IMR-90 (cell line): ENCODE measurements at regions of chr11 and their contacts with region 1.

Region 1: DNA sequence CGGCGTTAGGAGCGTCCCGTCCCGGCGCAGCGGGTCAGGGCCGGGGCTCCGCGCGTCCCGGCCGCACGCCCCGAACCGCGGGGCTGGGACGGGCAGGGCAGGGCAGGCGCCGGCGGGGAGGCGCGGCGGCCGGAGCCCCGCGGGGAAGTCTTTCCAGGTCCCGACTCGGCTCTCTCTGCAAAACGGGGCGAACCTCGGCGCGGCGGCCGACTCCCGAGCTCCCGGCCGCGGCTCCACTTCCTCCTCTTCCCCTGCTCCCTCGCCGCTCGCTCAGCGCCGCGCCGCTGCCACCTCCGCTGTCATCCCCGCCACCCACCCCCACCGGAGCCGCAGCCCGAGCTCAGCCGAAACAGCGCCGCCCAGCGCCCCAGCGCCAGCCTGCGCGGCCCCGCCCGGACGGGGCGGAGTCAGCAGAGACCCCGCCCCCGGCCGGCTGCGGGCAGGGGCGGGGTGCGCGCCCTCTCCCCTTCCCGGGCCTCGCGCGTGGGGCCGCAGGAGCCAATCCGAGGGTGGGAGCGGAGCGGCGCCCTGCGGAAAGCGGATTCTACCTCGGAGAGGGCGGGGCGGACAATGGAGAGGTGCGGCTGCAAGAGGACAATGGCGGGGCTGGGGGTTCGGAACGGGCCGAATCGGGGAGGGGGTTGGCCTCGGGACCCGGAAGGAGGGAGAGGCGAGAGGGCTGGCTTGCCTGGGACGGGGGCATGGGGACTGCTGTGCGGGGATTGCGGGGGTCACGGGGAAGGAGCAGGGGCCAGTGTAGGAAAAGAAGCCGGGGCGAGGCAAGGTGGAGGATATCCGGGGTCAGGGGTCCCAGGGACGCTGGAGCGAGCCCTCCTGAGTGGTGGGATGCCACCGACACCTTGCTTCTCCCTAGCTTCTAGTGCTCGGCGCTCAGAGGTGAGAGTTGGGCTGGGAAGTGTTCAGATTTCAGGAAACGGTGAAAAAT is at the start of gene GDPD5:
- DNase-seq: peak; percentile 64
- ATAC-seq: peak; percentile 98
- H3K4me3 ChIP-seq: peak within 1 kb of the TSS; percentile 90
- H3K27ac ChIP-seq: peak within 1 kb of the TSS; percentile 25; the same call in 1 of the 2 replicates
- H3K4me1 ChIP-seq: no peaks in the 10 kb centered on the region; the same call in 1 of the 2 replicates
- H3K27me3 ChIP-seq: peaks cover 10% of the 10 kb centered on the region; the same call in 1 of the 2 replicates
- CTCF ChIP-seq: peak; percentile 60
- POLR2A ChIP-seq: no peak
- RAD21 ChIP-seq: peak; percentile 45
- total RNA-seq, gene GDPD5: 1.7 and 2.0 TPM in 2 replicates

Region 2: GRCh38 chr11:75508044-75508561 is 17.8 kb before region 1 on chr11:
- CTCF ChIA-PET with region 1: no interaction called
- POLR2A ChIA-PET with region 1: no interaction called
- dilution Hi-C with region 1: no loop called
- in situ Hi-C with region 1: no loop called
- intact Hi-C with region 1: no loop called
- DNase-seq: no peak
- ATAC-seq: no peak
- H3K4me3 ChIP-seq: no peak overlapping the region
- H3K27ac ChIP-seq: no peak overlapping the region
- H3K4me1 ChIP-seq: peaks cover under 1% of the 10 kb centered on the region; the same call in 1 of the 2 replicates
- H3K27me3 ChIP-seq: no peaks in the 10 kb centered on the region
- CTCF ChIP-seq: no peak
- POLR2A ChIP-seq: no peak
- RAD21 ChIP-seq: no peak

Region 3: DNA sequence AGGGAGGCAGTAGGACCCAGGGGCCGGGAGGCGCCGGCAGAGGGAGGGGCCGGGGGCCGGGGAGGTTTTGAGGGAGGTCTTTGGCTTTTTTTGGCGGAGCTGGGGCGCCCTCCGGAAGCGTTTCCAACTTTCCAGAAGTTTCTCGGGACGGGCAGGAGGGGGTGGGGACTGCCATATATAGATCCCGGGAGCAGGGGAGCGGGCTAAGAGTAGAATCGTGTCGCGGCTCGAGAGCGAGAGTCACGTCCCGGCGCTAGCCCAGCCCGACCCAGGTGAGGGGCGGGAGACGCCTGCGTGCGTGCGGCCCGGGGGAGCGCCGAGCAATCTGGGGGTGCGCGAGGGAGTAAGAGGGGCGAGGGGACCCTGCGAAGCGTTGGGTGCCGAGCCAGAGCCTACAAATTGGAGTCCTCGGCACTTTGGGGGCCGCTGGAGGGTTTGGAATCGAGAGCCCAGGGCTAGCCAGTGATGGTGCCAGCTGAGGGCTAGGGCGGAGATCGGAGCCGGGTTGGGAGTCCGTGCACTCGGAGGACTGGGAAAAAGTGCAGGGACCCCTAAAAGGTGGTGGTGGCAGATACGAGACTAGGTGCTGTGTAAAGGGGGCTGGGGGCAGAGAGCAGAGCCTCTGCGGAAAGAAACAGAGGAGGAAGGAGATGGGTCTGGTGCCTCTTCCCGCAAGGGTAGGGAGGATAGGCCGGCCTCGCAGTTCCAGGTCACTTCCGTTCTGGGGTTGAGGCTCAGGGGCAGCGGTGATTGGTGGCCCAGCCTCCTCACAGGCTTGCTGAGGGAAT is 36.4 kb after region 1 on chr11 and contains the start of gene SERPINH1:
- CTCF ChIA-PET with region 1: interaction called, 3 read pairs
- POLR2A ChIA-PET with region 1: no interaction called
- dilution Hi-C with region 1: no loop called
- in situ Hi-C with region 1: no loop called
- intact Hi-C with region 1: loop called (anchors 2 kb)
- DNase-seq: peak; percentile 84
- ATAC-seq: peak; percentile 30
- H3K4me3 ChIP-seq: peak within 1 kb of the TSS; percentile 61
- H3K27ac ChIP-seq: peak within 1 kb of the TSS; percentile 96
- H3K4me1 ChIP-seq: peaks cover 47% of the 10 kb centered on the region
- H3K27me3 ChIP-seq: no peaks in the 10 kb centered on the region
- CTCF ChIP-seq: no peak
- POLR2A ChIP-seq: peak; percentile 94
- RAD21 ChIP-seq: no peak
- total RNA-seq, gene SERPINH1: 772 and 841 TPM in 2 replicates